ENCODE measurements at regions of chr1 and their contacts with region 1.

Region 1: DNA sequence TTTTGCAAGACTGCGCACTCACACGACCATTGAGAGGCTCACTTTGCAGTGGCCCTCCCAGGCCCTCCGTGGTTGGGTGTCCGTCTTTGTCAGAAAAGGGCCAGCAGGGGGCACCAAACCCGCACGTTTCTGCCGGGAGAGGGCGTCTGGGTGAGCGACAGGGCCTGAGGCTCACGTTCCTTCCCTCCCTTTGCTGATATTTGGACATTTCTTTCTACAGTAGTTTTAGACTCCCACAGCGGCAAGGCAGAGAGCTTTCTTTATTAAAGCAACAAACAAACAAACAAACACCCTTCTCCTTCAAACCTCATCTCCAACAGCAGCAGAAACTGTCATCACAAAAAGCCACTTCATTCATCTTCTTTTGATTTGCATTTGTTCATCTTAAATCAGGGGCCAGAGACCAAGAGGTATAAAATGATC is 79.2 kb upstream of the WDR26 start:
- DNase-seq: peak; percentile 65
- ATAC-seq: peak; percentile 88
- H3K4me3 Mint-ChIP-seq: no peak overlapping the region
- H3K27ac Mint-ChIP-seq: no peak overlapping the region
- H3K4me1 Mint-ChIP-seq: peaks cover 5% of the 10 kb centered on the region
- H3K27me3 Mint-ChIP-seq: no peaks in the 10 kb centered on the region
- CTCF ChIP-seq: peak; percentile 98

Region 2: DNA sequence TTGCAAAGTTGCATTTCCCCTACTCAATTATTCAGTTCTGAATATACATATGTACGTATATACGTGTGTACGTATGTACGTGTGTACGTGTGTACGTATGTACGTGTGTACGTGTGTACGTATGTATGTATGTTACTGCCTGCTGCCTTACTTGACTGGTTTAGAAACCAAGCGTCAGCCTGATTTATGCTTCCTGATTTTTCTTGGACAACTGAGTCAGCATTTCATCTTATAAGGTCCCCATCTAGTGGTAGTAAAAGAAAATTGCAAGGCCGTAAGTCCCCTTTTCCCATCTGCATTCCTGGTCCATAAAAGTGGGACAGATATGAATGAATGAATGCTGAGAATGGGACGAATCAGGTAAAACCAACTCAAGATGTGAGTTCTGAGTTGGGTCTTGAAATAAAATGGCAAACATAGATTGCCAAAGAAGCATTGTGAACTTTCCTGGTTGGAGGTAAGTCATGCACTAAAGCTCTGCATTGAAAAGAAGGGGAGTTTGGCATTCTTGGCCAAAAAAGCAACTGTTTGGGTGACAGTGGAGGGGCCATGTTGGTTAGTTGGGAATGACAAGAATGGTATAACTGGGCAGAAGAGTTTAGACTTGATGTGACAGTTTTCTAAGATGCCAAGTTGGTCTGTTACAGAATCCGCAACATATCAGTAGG is 339.2 kb after region 1 on chr1:
- CTCF ChIA-PET with region 1: no interaction called
- POLR2A ChIA-PET with region 1: no interaction called
- intact Hi-C with region 1: loop called (anchors 2 kb)
- DNase-seq: no peak
- ATAC-seq: no peak
- H3K4me3 Mint-ChIP-seq: no peak overlapping the region
- H3K27ac Mint-ChIP-seq: no peak overlapping the region
- H3K4me1 Mint-ChIP-seq: no peaks in the 10 kb centered on the region
- H3K27me3 Mint-ChIP-seq: no peaks in the 10 kb centered on the region
- CTCF ChIP-seq: no peak

Region 3: GRCh38 chr1:224922404-224923164 is 408.8 kb after region 1 on chr1:
- CTCF ChIA-PET with region 1: interaction called, 14 read pairs
- POLR2A ChIA-PET with region 1: no interaction called
- intact Hi-C with region 1: loop called (anchors 1 kb)
- DNase-seq: no peak
- ATAC-seq: no peak
- H3K4me3 Mint-ChIP-seq: no peak overlapping the region
- H3K27ac Mint-ChIP-seq: no peak overlapping the region
- H3K4me1 Mint-ChIP-seq: no peaks in the 10 kb centered on the region
- H3K27me3 Mint-ChIP-seq: peaks cover 5% of the 10 kb centered on the region
- CTCF ChIP-seq: no peak

Region 4: DNA sequence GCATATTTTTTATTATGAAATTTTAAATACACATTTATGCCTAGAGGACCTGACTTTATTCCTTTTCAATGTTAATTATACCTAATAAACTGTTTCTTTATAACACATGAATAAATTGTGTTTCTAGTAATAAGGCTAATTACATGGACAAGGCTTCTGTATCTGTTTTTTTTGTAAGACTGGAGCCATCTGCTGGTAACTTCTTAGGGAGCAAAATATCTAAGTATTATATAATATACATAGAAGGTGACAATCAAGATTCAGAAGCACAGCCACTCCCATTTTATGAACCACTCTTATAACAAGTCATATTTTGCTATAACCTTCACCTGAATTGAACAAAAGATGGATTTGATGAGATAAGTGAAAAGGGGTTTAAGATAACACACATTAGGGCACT is 829.8 kb after region 1 on chr1:
- CTCF ChIA-PET with region 1: no interaction called
- POLR2A ChIA-PET with region 1: no interaction called
- intact Hi-C with region 1: loop called (anchors 2 kb)
- DNase-seq: no peak
- ATAC-seq: no peak
- H3K4me3 Mint-ChIP-seq: no peak overlapping the region
- H3K27ac Mint-ChIP-seq: no peak overlapping the region
- H3K4me1 Mint-ChIP-seq: no peaks in the 10 kb centered on the region
- H3K27me3 Mint-ChIP-seq: peaks cover 22% of the 10 kb centered on the region
- CTCF ChIP-seq: no peak